Naive thymus-derived CD4-positive, alpha-beta T cell (primary cell): ENCODE measurements at regions of chr9 and their contacts with region 1.

Region 1: GRCh38 chr9:37119907-37120842 is at the start of gene ZCCHC7:
- DNase-seq: peak; percentile 95 to 99 (median 98)
- ATAC-seq: peak; percentile 97
- H3K4me3 ChIP-seq: peak within 1 kb of the TSS; percentile 93
- H3K4me3 Mint-ChIP-seq: peak within 1 kb of the TSS; percentile 88 to 99 (median 96)
- H3K27ac ChIP-seq: peak within 1 kb of the TSS; percentile 100
- H3K27ac Mint-ChIP-seq: peak within 1 kb of the TSS; percentile 93 to 100 (median 97)
- H3K4me1 ChIP-seq: peaks cover 11 to 25% of the 10 kb centered on the region in 2 donors
- H3K4me1 Mint-ChIP-seq: peaks cover 16 to 42% (median 32%) of the 10 kb centered on the region in 7 donors
- H3K27me3 ChIP-seq: no peaks in the 10 kb centered on the region
- H3K27me3 Mint-ChIP-seq: no peaks in the 10 kb centered on the region
- total RNA-seq, gene ZCCHC7: 26.1 to 47.1 (median 40.9) TPM

Region 2: DNA sequence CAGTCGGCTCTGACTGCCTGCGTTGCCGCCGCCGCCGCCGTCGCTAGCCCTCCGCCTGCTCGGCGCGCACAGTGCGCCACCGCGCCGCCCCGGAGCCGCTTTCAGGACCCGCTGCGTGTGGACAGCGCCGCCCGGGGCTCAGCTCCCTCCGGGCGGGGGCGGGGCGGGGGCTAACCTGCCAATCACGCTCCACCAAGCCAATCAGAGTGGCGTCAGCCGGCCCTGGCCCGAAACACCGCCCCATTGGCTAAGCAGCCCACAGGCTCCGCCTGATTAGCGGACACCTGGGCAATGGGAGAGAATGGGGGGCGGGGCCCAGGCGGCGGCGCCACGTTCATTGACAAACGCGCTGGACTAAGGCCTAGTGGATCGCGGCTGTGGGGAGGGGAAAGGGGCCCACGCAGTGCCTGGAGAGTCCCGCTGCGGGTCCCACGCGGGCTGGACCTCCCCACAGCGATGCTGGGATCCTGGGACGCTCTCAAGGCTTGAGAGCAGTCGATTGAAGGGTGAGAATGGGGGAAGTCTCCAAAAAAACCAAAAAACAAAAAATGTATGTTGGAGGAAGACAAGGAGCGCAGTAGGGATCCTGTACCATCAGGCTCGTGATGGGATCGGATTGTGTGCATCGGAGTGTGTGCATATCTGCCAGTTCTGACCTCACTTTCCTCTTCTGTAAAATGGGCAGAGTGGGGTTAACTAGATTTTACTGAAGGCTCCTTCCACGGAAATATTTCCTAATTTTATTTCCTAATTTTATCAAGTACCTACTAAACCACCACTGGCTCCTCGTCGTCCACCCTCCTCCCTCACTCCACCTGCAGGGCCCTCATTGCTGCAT is 92.4 kb before region 1 on chr9:
- CTCF ChIA-PET with region 1: no interaction called
- POLR2A ChIA-PET with region 1: no interaction called
- intact Hi-C with region 1: loop called in 1 of 2 experiments (anchors 1 kb)
- DNase-seq: peak; percentile 67 to 87 (median 77)
- ATAC-seq: peak; percentile 96
- H3K4me3 ChIP-seq: peak overlapping the region; percentile 29
- H3K4me3 Mint-ChIP-seq: peak overlapping the region; percentile 38 to 77 (median 62)
- H3K27ac ChIP-seq: no peak overlapping the region
- H3K27ac Mint-ChIP-seq: peak overlapping the region in 1 of 9 donors; percentile 42
- H3K4me1 ChIP-seq: peaks cover 25 to 56% of the 10 kb centered on the region in 2 donors
- H3K4me1 Mint-ChIP-seq: peaks cover 18 to 50% (median 37%) of the 10 kb centered on the region in 7 donors
- H3K27me3 ChIP-seq: peaks cover 34 to 56% of the 10 kb centered on the region in 2 donors
- H3K27me3 Mint-ChIP-seq: peaks cover 73 to 95% (median 81%) of the 10 kb centered on the region in 5 donors

Region 3: DNA sequence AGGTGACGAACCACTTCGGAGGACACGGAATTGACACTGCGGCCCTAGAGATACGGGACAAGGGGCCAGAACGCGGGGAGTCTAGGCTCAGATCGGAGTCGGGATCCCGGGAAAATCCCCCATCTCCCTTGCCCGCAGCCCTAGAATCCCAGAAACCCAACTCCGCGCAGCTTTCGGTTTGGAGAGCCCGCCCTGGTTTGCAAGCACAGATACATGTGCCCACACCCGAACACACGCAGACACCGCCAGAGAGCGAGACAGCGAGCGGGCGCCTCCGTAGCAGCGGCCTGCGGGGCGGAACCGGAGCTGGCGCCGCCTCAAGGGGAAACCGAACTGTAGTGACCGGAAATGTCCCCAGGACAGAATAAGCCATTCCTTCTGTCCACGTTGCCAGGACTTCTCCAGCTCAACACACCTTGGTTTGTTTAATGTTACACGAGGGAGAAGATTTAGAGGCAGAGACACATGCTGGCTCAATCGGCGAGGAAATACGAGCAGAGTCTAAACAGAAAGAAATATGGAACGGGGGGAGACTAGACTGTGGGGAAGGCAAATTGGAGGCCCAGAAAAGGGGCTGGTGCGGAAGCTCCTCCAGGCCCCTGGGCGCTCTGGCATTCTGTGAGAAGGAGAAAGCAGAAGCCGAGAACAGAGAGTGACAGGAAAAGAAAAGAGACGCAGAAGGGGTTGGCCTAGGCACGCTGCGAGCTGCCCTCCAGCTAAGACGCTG is 83.2 kb before region 1 on chr9:
- CTCF ChIA-PET with region 1: no interaction called
- POLR2A ChIA-PET with region 1: interaction called, 5 read pairs
- intact Hi-C with region 1: loop called in 1 of 2 experiments (anchors 1 kb)
- DNase-seq: peak in 8 of 9 donors; percentile 31 to 55 (median 47)
- ATAC-seq: peak; percentile 74
- H3K4me3 ChIP-seq: peak overlapping the region; percentile 49
- H3K4me3 Mint-ChIP-seq: peak overlapping the region; percentile 76 to 98 (median 88)
- H3K27ac ChIP-seq: no peak overlapping the region
- H3K27ac Mint-ChIP-seq: peak overlapping the region in 5 of 9 donors; percentile 6 to 75 (median 30)
- H3K4me1 ChIP-seq: peaks cover 16 to 34% of the 10 kb centered on the region in 2 donors
- H3K4me1 Mint-ChIP-seq: peaks cover 21 to 50% (median 36%) of the 10 kb centered on the region in 7 donors
- H3K27me3 ChIP-seq: peaks cover 25 to 62% of the 10 kb centered on the region in 2 donors
- H3K27me3 Mint-ChIP-seq: peaks cover 78 to 94% (median 84%) of the 10 kb centered on the region in 5 donors

Region 4: GRCh38 chr9:37144762-37145161 is 24.6 kb after region 1 on chr9:
- CTCF ChIA-PET with region 1: no interaction called
- POLR2A ChIA-PET with region 1: interaction called, 9 read pairs
- intact Hi-C with region 1: loop called (anchors 1 kb)
- DNase-seq: no peak
- ATAC-seq: no peak
- H3K4me3 ChIP-seq: no peak overlapping the region
- H3K4me3 Mint-ChIP-seq: peak overlapping the region in 9 of 10 donors; percentile 8 to 77 (median 50)
- H3K27ac ChIP-seq: no peak overlapping the region
- H3K27ac Mint-ChIP-seq: peak overlapping the region in 8 of 9 donors; percentile 23 to 91 (median 83)
- H3K4me1 ChIP-seq: peaks cover 19 to 47% of the 10 kb centered on the region in 2 donors
- H3K4me1 Mint-ChIP-seq: peaks cover 21 to 89% (median 71%) of the 10 kb centered on the region in 7 donors
- H3K27me3 ChIP-seq: no peaks in the 10 kb centered on the region
- H3K27me3 Mint-ChIP-seq: no peaks in the 10 kb centered on the region

Region 5: GRCh38 chr9:37197158-37198038 is 77.2 kb after region 1 on chr9:
- CTCF ChIA-PET with region 1: no interaction called
- POLR2A ChIA-PET with region 1: no interaction called
- intact Hi-C with region 1: loop called in 1 of 2 experiments (anchors 5 kb)
- DNase-seq: peak in 4 of 9 donors; percentile 5 to 17 (median 14)
- ATAC-seq: peak; percentile 58
- H3K4me3 ChIP-seq: no peak overlapping the region
- H3K4me3 Mint-ChIP-seq: peak overlapping the region in 9 of 10 donors; percentile 12 to 72 (median 46)
- H3K27ac ChIP-seq: peak overlapping the region; percentile 22
- H3K27ac Mint-ChIP-seq: peak overlapping the region in 7 of 9 donors; percentile 2 to 93 (median 49)
- H3K4me1 ChIP-seq: peaks cover 0 to 19% of the 10 kb centered on the region in 2 donors
- H3K4me1 Mint-ChIP-seq: peaks cover 39 to 68% (median 59%) of the 10 kb centered on the region in 7 donors
- H3K27me3 ChIP-seq: no peaks in the 10 kb centered on the region
- H3K27me3 Mint-ChIP-seq: no peaks in the 10 kb centered on the region

Region 6: DNA sequence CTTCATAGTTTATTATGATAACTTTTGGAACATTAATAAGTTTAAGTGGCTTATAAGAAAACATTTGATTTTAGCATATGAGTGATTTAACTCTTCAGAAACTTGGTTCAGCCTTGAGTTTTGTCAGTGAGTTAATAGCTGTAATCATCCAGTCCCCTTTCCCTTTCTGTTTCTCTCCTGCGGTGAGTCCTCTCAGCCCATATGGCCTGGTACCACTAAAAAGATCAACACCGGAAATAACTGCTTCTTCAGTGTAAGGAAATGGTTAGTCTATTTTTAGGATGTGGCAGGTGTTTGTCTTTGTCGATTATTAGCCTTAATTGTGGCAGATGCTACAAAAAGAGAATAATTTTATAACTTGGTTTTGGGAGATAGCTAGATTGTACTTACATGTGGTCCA is 182.1 kb after region 1 on chr9:
- CTCF ChIA-PET with region 1: no interaction called
- POLR2A ChIA-PET with region 1: interaction called, 3 read pairs
- intact Hi-C with region 1: loop called (anchors 1 to 5 kb)
- DNase-seq: peak in 7 of 9 donors; percentile 26 to 64 (median 54)
- ATAC-seq: peak; percentile 88
- H3K4me3 ChIP-seq: no peak overlapping the region
- H3K4me3 Mint-ChIP-seq: peak overlapping the region; percentile 64 to 78 (median 74)
- H3K27ac ChIP-seq: no peak overlapping the region
- H3K27ac Mint-ChIP-seq: peak overlapping the region; percentile 34 to 89 (median 71)
- H3K4me1 ChIP-seq: peaks cover 25 to 37% of the 10 kb centered on the region in 2 donors
- H3K4me1 Mint-ChIP-seq: peaks cover 31 to 70% (median 58%) of the 10 kb centered on the region in 7 donors
- H3K27me3 ChIP-seq: no peaks in the 10 kb centered on the region
- H3K27me3 Mint-ChIP-seq: no peaks in the 10 kb centered on the region

Region 7: GRCh38 chr9:37422289-37423104 is 302.3 kb after region 1 on chr9 and contains the start of gene GRHPR:
- CTCF ChIA-PET with region 1: no interaction called
- POLR2A ChIA-PET with region 1: interaction called, 3 read pairs
- intact Hi-C with region 1: loop called in 1 of 2 experiments (anchors 1 kb)
- DNase-seq: peak; percentile 76 to 93 (median 84)
- ATAC-seq: peak; percentile 99
- H3K4me3 ChIP-seq: peak within 1 kb of the TSS; percentile 86
- H3K4me3 Mint-ChIP-seq: peak within 1 kb of the TSS; percentile 84 to 98 (median 96)
- H3K27ac ChIP-seq: peak within 1 kb of the TSS; percentile 89
- H3K27ac Mint-ChIP-seq: peak within 1 kb of the TSS; percentile 87 to 98 (median 95)
- H3K4me1 ChIP-seq: peaks cover 5 to 12% of the 10 kb centered on the region in 2 donors
- H3K4me1 Mint-ChIP-seq: peaks cover 19 to 31% (median 23%) of the 10 kb centered on the region in 7 donors
- H3K27me3 ChIP-seq: no peaks in the 10 kb centered on the region
- H3K27me3 Mint-ChIP-seq: no peaks in the 10 kb centered on the region
- total RNA-seq, gene GRHPR: 33.2 to 58.6 (median 53.1) TPM